ENCODE measurements at regions of chr20 and their contacts with region 1.

Region 1: DNA sequence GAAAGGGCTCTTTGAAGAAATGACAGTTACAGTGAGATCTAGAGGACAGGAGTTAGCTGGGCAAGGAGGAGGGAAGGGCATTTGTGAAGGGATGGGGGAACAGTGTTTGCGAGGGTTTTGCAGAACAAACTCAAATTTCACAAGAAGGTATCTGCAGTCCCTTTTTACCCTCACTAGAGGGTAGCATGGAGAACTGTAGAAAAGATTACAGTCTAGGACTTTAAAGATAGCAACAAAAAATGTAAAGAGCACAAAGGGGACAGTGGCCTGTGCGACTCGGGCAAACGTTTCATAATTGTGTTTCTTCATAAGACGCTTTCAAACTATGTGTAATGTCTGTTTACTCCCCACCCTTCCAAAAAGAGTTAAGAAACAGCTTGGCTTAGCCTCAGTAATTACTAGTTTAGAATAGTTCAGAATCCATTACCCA is 21.2 kb upstream of the ASXL1 start:
- DNase-seq: no peak
- ATAC-seq: no peak

Region 2: DNA sequence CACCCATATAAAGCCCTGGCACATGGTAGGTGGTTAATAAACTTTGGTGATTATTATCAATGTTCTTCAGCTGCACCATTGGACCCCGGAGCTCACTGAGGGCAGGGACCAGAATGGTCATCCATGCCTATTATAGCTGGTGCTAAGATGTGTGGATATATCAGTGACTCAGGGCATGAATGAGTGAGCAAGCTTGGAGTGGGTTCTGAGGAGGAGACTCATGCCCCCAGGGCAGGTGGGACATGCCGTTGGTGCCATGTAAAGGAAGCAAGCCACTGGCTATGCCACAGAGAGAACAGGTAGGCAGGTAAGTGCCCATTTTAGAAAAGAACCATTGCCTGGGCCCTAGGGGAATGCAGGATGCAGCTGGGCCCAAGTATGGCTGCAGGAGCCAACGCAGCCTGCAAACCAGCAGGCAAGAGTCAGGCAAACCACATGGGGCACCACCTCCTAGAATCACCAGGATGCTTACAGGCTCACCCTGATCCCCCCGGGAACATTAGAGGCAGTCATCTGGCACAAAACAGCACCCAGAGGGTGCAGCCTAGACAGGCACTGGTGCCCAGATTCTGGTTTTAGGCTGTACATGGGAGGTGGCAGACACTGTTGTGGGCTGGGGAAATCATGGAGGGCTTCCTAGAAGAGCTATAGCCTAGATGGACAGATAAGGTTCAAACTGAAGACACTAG is 152.8 kb before region 1 on chr20:
- intact Hi-C with region 1: no loop called
- DNase-seq: no peak
- ATAC-seq: no peak

Region 3: GRCh38 chr20:32484958-32485769 is 148.2 kb after region 1 on chr20:
- intact Hi-C with region 1: loop called (anchors 10 kb)
- DNase-seq: peak; percentile 85
- ATAC-seq: peak; percentile 73